B cell (primary cell): ENCODE measurements at regions of chr13 and their contacts with region 1.

Region 1: GRCh38 chr13:20828539-20829364 is 55.0 kb upstream of the EEF1AKMT1 start:
- DNase-seq: peak; percentile 76
- ATAC-seq: peak; percentile 82
- H3K4me3 ChIP-seq: no peak overlapping the region
- H3K4me3 Mint-ChIP-seq: peak overlapping the region; percentile 32
- H3K27ac ChIP-seq: peak overlapping the region in 1 of 2 donors; percentile 74
- H3K27ac Mint-ChIP-seq: peak overlapping the region; percentile 8
- H3K4me1 ChIP-seq: no peaks in the 10 kb centered on the region
- H3K4me1 Mint-ChIP-seq: peaks cover 9% of the 10 kb centered on the region
- H3K27me3 ChIP-seq: no peaks in the 10 kb centered on the region
- H3K27me3 Mint-ChIP-seq: no peaks in the 10 kb centered on the region
- CTCF ChIP-seq: peak; percentile 81

Region 2: DNA sequence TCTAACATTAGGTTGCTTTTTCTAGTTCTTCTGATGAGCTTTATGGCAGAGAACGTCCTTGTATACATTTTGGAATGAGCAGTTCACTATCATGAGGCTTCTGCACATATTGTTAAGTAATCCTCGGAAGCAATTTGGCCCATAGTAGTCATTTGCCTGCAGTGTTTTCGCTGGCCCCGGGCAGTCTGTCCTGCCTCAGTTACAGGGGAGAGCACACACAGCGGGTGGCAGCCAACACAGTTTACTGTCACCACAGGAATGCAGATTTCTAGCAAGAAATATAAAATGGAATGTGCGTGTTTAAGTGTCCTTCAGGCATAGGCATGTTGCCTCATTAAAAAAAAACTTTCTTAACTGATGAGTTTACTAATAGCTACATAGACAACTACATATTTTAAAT is 525.1 kb before region 1 on chr13:
- CTCF ChIA-PET with region 1: no interaction called
- POLR2A ChIA-PET with region 1: no interaction called
- intact Hi-C with region 1: no loop called
- DNase-seq: no peak
- ATAC-seq: no peak
- H3K4me3 ChIP-seq: no peak overlapping the region
- H3K4me3 Mint-ChIP-seq: no peak overlapping the region
- H3K27ac ChIP-seq: no peak overlapping the region
- H3K27ac Mint-ChIP-seq: no peak overlapping the region
- H3K4me1 ChIP-seq: peaks cover 0 to 5% of the 10 kb centered on the region in 2 donors
- H3K4me1 Mint-ChIP-seq: no peaks in the 10 kb centered on the region
- H3K27me3 ChIP-seq: peaks cover 0 to 28% (median 11%) of the 10 kb centered on the region in 4 experiments
- H3K27me3 Mint-ChIP-seq: peaks cover 49% of the 10 kb centered on the region
- CTCF ChIP-seq: no peak

Region 3: DNA sequence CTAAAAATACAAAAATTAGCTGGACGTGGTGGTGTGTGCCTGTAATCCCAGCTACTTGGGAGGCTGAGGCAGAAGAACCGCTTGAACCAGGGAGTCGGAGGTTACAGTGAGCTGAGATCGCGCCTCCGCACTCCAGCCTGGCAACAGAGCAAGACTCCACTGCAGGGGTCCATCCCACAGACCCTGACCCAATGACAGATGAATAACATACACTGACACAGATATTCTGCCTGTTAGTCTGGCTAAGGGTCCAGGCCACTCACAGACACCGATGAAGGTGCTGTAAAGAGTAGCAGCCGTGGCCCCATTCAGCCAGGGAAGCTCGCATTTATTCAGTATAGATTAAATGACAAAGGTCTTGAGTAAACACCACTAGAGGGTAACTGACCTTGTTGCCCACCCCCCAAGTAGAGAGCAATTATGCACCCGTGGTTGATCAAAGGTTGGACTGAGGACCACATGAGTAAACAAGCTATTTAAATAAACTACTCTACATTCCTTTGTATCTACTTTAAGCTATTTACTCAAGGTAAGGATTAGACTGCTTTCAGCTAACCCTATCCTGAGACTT is 294.6 kb before region 1 on chr13:
- CTCF ChIA-PET with region 1: no interaction called
- POLR2A ChIA-PET with region 1: no interaction called
- intact Hi-C with region 1: no loop called
- DNase-seq: no peak
- ATAC-seq: no peak
- H3K4me3 ChIP-seq: no peak overlapping the region
- H3K4me3 Mint-ChIP-seq: no peak overlapping the region
- H3K27ac ChIP-seq: no peak overlapping the region
- H3K27ac Mint-ChIP-seq: no peak overlapping the region
- H3K4me1 ChIP-seq: no peaks in the 10 kb centered on the region
- H3K4me1 Mint-ChIP-seq: no peaks in the 10 kb centered on the region
- H3K27me3 ChIP-seq: no peaks in the 10 kb centered on the region
- H3K27me3 Mint-ChIP-seq: peaks cover 6% of the 10 kb centered on the region
- CTCF ChIP-seq: no peak

Region 4: GRCh38 chr13:20713751-20714150 is 115.0 kb before region 1 on chr13:
- CTCF ChIA-PET with region 1: interaction called, 35 read pairs
- POLR2A ChIA-PET with region 1: no interaction called
- intact Hi-C with region 1: loop called (anchors 1 kb)
- DNase-seq: no peak
- ATAC-seq: no peak
- H3K4me3 ChIP-seq: no peak overlapping the region
- H3K4me3 Mint-ChIP-seq: no peak overlapping the region
- H3K27ac ChIP-seq: no peak overlapping the region
- H3K27ac Mint-ChIP-seq: no peak overlapping the region
- H3K4me1 ChIP-seq: peaks cover 0 to 8% of the 10 kb centered on the region in 2 donors
- H3K4me1 Mint-ChIP-seq: peaks cover 7% of the 10 kb centered on the region
- H3K27me3 ChIP-seq: peaks cover 0 to 4% (median 0%) of the 10 kb centered on the region in 4 experiments
- H3K27me3 Mint-ChIP-seq: peaks cover 8% of the 10 kb centered on the region
- CTCF ChIP-seq: no peak

Region 5: GRCh38 chr13:20773194-20774080 is 55.3 kb before region 1 on chr13 and contains the start of gene EEF1AKMT1:
- CTCF ChIA-PET with region 1: interaction called, 8 read pairs
- POLR2A ChIA-PET with region 1: no interaction called
- intact Hi-C with region 1: loop called (anchors 10 kb)
- DNase-seq: peak; percentile 94
- ATAC-seq: peak; percentile 95
- H3K4me3 ChIP-seq: peak within 1 kb of the TSS; percentile 53 to 80 (median 66)
- H3K4me3 Mint-ChIP-seq: peak within 1 kb of the TSS; percentile 96
- H3K27ac ChIP-seq: peak within 1 kb of the TSS; percentile 77 to 88
- H3K27ac Mint-ChIP-seq: peak within 1 kb of the TSS; percentile 100
- H3K4me1 ChIP-seq: peaks cover 7 to 15% of the 10 kb centered on the region in 2 donors
- H3K4me1 Mint-ChIP-seq: peaks cover 16% of the 10 kb centered on the region
- H3K27me3 ChIP-seq: no peaks in the 10 kb centered on the region
- H3K27me3 Mint-ChIP-seq: no peaks in the 10 kb centered on the region
- CTCF ChIP-seq: no peak
- total RNA-seq, gene EEF1AKMT1: 4.1 and 4.9 TPM in 2 replicates

Region 6: DNA sequence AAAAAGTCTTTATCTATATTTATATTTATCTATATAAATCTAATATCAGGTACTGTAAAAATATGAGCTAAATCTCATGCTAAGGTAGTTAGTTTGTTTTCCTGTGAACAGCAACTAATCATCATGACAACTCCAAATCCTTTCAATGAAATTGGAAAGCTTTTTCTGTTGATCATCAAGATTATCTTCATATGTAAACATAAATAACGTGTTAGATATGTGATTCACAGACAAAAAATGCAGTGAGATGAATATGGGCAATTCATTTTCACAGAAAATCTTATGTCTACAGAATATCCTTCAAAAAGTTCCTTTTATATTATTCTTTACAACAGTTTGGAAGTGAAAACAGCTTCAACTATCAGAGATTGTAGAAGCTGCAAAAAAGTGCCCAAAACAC is 13.3 kb before region 1 on chr13:
- CTCF ChIA-PET with region 1: interaction called, 22 read pairs
- POLR2A ChIA-PET with region 1: no interaction called
- intact Hi-C with region 1: no loop called
- DNase-seq: no peak
- ATAC-seq: no peak
- H3K4me3 ChIP-seq: no peak overlapping the region
- H3K4me3 Mint-ChIP-seq: no peak overlapping the region
- H3K27ac ChIP-seq: no peak overlapping the region
- H3K27ac Mint-ChIP-seq: no peak overlapping the region
- H3K4me1 ChIP-seq: no peaks in the 10 kb centered on the region
- H3K4me1 Mint-ChIP-seq: no peaks in the 10 kb centered on the region
- H3K27me3 ChIP-seq: no peaks in the 10 kb centered on the region
- H3K27me3 Mint-ChIP-seq: no peaks in the 10 kb centered on the region
- CTCF ChIP-seq: no peak

Region 7: GRCh38 chr13:20843166-20843565 is 14.4 kb after region 1 on chr13:
- CTCF ChIA-PET with region 1: interaction called, 24 read pairs
- POLR2A ChIA-PET with region 1: no interaction called
- intact Hi-C with region 1: no loop called
- DNase-seq: no peak
- ATAC-seq: no peak
- H3K4me3 ChIP-seq: no peak overlapping the region
- H3K4me3 Mint-ChIP-seq: no peak overlapping the region
- H3K27ac ChIP-seq: no peak overlapping the region
- H3K27ac Mint-ChIP-seq: no peak overlapping the region
- H3K4me1 ChIP-seq: no peaks in the 10 kb centered on the region
- H3K4me1 Mint-ChIP-seq: no peaks in the 10 kb centered on the region
- H3K27me3 ChIP-seq: no peaks in the 10 kb centered on the region
- H3K27me3 Mint-ChIP-seq: no peaks in the 10 kb centered on the region
- CTCF ChIP-seq: no peak

Region 8: GRCh38 chr13:20924758-20925394 is 96.1 kb after region 1 on chr13:
- CTCF ChIA-PET with region 1: interaction called, 13 read pairs
- POLR2A ChIA-PET with region 1: no interaction called
- intact Hi-C with region 1: no loop called
- DNase-seq: peak; percentile 68
- ATAC-seq: no peak
- H3K4me3 ChIP-seq: no peak overlapping the region
- H3K4me3 Mint-ChIP-seq: no peak overlapping the region
- H3K27ac ChIP-seq: no peak overlapping the region
- H3K27ac Mint-ChIP-seq: no peak overlapping the region
- H3K4me1 ChIP-seq: no peaks in the 10 kb centered on the region
- H3K4me1 Mint-ChIP-seq: no peaks in the 10 kb centered on the region
- H3K27me3 ChIP-seq: no peaks in the 10 kb centered on the region
- H3K27me3 Mint-ChIP-seq: no peaks in the 10 kb centered on the region
- CTCF ChIP-seq: peak; percentile 90